Gastrocnemius medialis (tissue), 4 donors: ENCODE measurements at regions of chr2 and their contacts with region 1.

Region 1: DNA sequence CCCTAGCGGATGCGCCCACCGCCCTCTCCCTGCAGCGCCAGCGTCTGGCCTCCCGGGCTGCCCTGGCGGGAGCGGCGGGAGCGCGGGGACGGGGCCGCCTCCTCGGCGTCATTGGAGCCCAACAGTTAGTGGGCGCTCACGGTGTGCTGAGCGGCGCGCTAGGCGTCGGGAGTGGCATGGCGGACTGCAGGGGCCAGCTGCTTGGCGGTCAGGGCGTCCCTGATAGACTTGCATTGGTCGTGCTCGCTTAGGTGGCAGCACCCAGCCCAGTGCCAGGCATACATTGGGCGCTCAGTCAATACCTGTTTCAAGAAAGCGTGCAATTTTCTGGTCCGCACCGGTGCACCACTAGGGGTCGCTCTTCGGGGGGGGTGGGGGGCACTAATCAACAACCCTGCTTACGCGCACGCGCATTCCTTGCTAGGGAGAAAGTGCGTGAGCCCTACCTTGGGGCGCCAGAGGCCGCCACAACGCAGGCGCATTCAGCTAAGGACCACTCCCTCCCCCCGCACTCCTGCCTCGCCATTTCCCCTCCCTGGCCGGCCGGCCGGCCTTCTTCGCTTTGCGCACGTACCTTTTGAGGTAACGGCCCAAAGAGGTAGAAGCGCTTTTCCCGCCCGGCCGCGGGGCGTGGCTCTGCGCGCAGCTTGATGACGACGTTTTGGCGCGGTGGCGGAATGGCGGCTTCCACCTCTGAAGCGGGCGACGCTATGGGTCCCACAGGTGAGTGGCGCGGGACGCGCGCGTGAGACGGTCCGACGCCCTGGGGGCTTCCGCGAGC is 411 bp upstream of the MZT2A start:
- DNase-seq: peak; percentile 81 to 87
- ATAC-seq: peak; percentile 91 to 93
- H3K4me3 ChIP-seq: peak overlapping the region; percentile 82 to 96 (median 88)
- H3K27ac ChIP-seq: peak overlapping the region; percentile 87 to 95 (median 94)
- H3K4me1 ChIP-seq: peaks cover 8 to 19% of the 10 kb centered on the region in 2 donors
- H3K27me3 ChIP-seq: no peaks in the 10 kb centered on the region
- CTCF ChIP-seq: peak; percentile 49 to 86 (median 84)
- POLR2A ChIP-seq: peak; percentile 20 to 33

Region 2: DNA sequence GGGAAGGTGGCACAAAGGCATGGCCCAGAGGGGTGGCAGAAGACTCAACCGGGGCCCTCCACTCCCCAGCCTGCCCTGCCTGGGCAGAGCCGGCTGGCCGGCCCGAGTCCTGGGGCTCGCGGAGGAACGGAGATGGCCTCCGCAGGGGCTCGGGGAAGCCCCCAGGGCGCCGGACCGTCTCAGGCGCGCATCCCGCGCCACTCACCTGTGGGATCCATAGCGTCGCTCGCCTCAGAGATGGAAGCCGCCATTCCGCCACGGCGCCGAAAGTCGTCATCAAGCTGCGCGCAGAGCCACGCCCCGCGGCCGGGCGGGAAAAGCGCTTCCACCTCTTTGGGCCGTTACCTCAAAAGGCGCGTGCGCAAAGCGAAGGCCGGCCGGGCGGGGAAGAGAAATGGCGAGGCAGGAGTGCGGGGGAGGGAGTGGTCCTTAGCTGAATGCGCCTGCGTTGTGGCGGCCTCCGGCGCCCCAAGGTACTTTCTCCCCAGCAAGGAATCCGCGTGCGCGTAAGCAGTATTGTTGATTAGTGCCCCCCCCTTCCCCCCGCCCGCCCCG is 1311.2 kb before region 1 on chr2 and contains the start of gene SMPD4:
- in situ Hi-C with region 1: no loop called
- intact Hi-C with region 1: loop called (anchors 5 kb)
- DNase-seq: peak; percentile 91 to 94
- ATAC-seq: peak; percentile 94 to 95
- H3K4me3 ChIP-seq: peak within 1 kb of the TSS; percentile 88 to 99 (median 93)
- H3K27ac ChIP-seq: peak within 1 kb of the TSS; percentile 88 to 93 (median 91)
- H3K4me1 ChIP-seq: peaks cover 5 to 11% of the 10 kb centered on the region in 2 donors
- H3K27me3 ChIP-seq: no peaks in the 10 kb centered on the region
- CTCF ChIP-seq: no peak
- POLR2A ChIP-seq: no peak
- total RNA-seq, gene SMPD4: 19.5 to 33.4 (median 24.5) TPM

Region 3: GRCh38 chr2:131105156-131105949 is 387.3 kb before region 1 on chr2 and contains the start of gene PLEKHB2:
- in situ Hi-C with region 1: no loop called
- intact Hi-C with region 1: loop called (anchors 10 kb)
- DNase-seq: peak; percentile 80 to 87
- ATAC-seq: peak; percentile 71 to 79
- H3K4me3 ChIP-seq: peak within 1 kb of the TSS; percentile 81 to 98 (median 94)
- H3K27ac ChIP-seq: peak within 1 kb of the TSS; percentile 95 to 99 (median 96)
- H3K4me1 ChIP-seq: peaks cover 21 to 29% of the 10 kb centered on the region in 2 donors
- H3K27me3 ChIP-seq: no peaks in the 10 kb centered on the region
- CTCF ChIP-seq: peak in 3 of 5 experiments; percentile 10 to 27 (median 21)
- POLR2A ChIP-seq: peak; percentile 93 to 97
- total RNA-seq, gene PLEKHB2: 24.0 to 105 (median 68.3) TPM

Region 4: DNA sequence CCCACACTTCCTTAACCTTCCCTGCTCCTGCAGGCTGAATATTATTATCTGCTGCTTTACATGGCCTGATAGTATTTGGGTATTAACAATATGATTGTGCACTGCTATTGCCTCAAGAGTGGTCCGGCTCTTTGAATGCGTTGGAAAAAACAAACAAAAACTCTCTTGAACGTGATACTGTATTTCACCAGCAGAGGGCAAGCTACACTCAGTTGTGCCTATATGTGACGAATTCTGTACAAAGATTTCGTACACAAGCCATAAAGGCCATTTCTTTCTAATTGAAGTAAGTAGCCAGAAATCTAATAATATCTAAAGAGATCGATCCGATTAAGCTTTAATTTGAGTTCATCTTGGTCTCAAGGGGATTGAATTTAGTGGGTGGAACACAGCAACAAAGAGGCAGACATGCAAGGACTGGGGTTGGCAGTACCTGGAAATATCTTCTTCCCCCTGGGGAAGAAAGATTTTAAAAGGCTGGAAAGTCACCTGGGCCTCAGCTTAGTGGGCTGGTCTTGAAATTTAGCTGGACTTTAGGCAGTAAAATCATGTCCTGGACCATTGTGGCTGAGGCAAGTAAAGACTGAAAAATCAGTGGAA is 79.4 kb before region 1 on chr2:
- in situ Hi-C with region 1: no loop called
- intact Hi-C with region 1: loop called (anchors 2 kb)
- DNase-seq: no peak
- ATAC-seq: peak in 1 of 2 donors; percentile 62
- H3K4me3 ChIP-seq: no peak overlapping the region
- H3K27ac ChIP-seq: no peak overlapping the region
- H3K4me1 ChIP-seq: no peaks in the 10 kb centered on the region
- H3K27me3 ChIP-seq: peaks cover 0 to 5% (median 0%) of the 10 kb centered on the region in 3 donors
- CTCF ChIP-seq: peak; percentile 51 to 76 (median 62)
- POLR2A ChIP-seq: no peak

Region 5: GRCh38 chr2:131521961-131522794 is 29.6 kb after region 1 on chr2:
- in situ Hi-C with region 1: no loop called
- intact Hi-C with region 1: no loop called
- DNase-seq: no peak
- ATAC-seq: peak; percentile 30 to 39
- H3K4me3 ChIP-seq: no peak overlapping the region
- H3K27ac ChIP-seq: no peak overlapping the region
- H3K4me1 ChIP-seq: no peaks in the 10 kb centered on the region
- H3K27me3 ChIP-seq: peaks cover 0 to under 1% (median 0%) of the 10 kb centered on the region in 3 donors
- CTCF ChIP-seq: no peak
- POLR2A ChIP-seq: no peak

Region 6: GRCh38 chr2:131682122-131682944 is 189.7 kb after region 1 on chr2:
- in situ Hi-C with region 1: no loop called
- intact Hi-C with region 1: loop called (anchors 5 kb)
- DNase-seq: peak; percentile 45 to 77
- ATAC-seq: peak; percentile 97 to 98
- H3K4me3 ChIP-seq: peak overlapping the region; percentile 70 to 81 (median 75)
- H3K27ac ChIP-seq: peak overlapping the region; percentile 74 to 83 (median 82)
- H3K4me1 ChIP-seq: peaks cover 4 to 6% of the 10 kb centered on the region in 2 donors
- H3K27me3 ChIP-seq: no peaks in the 10 kb centered on the region
- CTCF ChIP-seq: peak in 1 of 5 experiments; percentile 26
- POLR2A ChIP-seq: peak in 1 of 2 donors; percentile 27